ENCODE measurements at regions of chr11 and their contacts with region 1.

Region 1: DNA sequence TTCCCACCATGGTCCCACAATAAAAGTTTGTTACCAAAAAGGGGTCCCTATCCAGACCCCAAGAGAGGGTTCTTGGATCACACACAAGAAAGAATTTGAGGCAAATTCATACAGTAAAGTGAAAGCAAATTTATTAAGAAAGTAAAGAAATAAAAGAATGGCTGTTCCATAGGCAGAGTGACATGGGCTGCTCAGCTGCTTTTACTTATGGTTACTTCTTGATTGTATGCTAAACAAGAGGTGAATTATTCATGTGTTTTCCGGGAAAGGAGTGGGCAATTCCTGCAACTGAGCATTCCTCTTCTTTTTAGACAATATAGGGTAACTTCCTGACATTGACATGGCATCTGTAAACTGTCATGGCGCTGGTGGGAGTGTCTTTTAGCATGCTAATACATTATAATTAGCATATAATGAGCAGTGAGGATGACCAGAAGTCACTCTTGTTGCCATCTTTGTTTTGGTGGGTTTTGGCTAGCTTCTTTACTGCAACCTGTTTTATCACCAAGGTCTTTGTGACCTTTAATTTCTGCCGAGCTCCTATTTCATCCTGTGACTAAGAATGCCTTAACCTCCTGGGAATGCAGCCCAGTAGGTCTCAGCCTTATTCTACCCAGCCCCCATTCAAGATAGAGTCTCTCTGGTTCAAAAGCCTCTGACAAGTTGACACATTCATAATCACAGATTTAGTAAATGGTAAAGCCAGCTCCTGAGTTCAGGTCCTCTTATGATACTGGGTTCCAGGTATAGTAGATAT is 240.7 kb upstream of the PDGFD start:
- DNase-seq: no peak
- H3K4me3 ChIP-seq: no peak overlapping the region
- H3K27ac ChIP-seq: no peak overlapping the region
- H3K4me1 ChIP-seq: no peaks in the 10 kb centered on the region
- H3K27me3 ChIP-seq: no peaks in the 10 kb centered on the region
- CTCF ChIP-seq: no peak

Region 2: GRCh38 chr11:104394508-104394907 is 10.1 kb before region 1 on chr11:
- CTCF ChIA-PET with region 1: no interaction called
- dilution Hi-C with region 1: no loop called
- in situ Hi-C with region 1: no loop called
- intact Hi-C with region 1: loop called (anchors 1 kb)
- DNase-seq: no peak
- H3K4me3 ChIP-seq: no peak overlapping the region
- H3K27ac ChIP-seq: no peak overlapping the region
- H3K4me1 ChIP-seq: no peaks in the 10 kb centered on the region
- H3K27me3 ChIP-seq: no peaks in the 10 kb centered on the region
- CTCF ChIP-seq: no peak